ENCODE measurements at regions of chr13 and their contacts with region 1.

Region 1: DNA sequence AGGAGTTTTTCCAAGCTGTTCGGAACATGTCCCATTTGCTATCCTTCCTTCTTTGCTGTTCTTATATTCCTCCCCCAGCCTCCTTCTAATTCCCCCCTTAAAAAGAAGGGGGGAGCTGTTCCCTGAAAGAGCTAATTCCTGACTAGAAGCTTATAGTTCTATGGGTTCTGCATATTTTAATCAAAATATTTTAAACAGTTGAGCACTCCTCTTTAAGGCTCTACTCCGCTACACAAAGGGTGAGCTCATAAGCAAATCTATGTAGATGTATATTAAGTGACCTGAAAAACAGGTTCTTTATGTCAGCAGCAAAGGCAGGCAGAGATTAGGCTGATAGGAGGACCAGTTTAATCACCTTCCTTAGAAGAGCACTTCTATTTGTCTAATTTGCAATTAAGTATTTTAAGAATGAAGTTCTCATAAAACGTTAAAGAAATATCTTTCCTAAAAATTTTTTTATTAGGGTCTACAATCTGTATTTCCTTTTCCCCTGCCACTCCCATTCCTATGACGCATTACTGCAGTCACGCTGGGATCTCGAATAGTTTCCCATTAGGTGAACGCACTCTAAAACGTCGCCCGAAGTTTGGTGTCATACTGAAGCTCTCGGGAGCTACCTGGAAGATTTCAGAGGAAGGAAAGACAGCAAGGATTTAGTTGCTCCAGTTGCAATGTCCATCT is 5.2 kb downstream of the EFNB2 start:
- DNase-seq: no peak
- H3K4me3 ChIP-seq: no peak overlapping the region
- H3K4me3 Mint-ChIP-seq: peak overlapping the region; percentile 97
- H3K27ac Mint-ChIP-seq: peak overlapping the region; percentile 67
- H3K4me1 ChIP-seq: peaks cover 58% of the 10 kb centered on the region
- H3K4me1 Mint-ChIP-seq: peaks cover 62% of the 10 kb centered on the region
- H3K27me3 ChIP-seq: no peaks in the 10 kb centered on the region
- H3K27me3 Mint-ChIP-seq: no peaks in the 10 kb centered on the region
- CTCF ChIP-seq: no peak

Region 2: DNA sequence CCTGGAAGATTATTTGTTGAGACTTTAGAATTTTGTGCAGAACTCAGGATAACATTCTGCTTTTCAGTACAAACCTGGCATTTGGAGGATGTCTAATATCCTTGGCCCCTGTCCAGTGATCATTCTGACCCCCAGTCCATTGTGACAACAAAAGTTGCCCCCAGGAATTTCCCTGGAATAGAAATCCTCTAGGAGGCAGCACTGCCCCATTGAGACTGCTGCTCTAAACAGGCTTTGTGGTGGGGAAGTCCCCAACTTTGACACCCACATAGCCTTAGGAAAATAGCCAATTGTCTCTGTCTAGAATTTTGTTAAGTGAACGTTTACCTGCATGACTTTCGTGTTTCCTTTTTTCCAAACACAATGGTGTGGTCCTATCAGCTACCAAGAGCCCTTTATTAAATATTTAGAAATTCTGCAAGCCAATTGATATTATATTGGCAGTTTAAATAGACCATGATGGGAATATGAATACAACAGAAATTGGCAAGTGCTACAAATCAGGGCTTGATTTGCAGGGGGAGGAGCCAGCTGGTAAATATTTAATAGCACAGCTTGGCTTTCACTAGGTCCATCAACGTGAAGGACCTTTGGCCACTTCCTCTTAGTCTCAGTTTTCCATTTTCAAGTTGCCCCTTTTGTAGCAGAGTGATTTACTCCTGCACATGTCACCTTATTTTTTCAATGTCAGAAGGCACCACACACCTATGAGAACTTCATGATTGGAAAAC is 446.5 kb before region 1 on chr13:
- CTCF ChIA-PET with region 1: no interaction called
- POLR2A ChIA-PET with region 1: no interaction called
- intact Hi-C with region 1: loop called (anchors 1 kb)
- DNase-seq: peak; percentile 67 to 69
- H3K4me3 ChIP-seq: no peak overlapping the region
- H3K4me3 Mint-ChIP-seq: no peak overlapping the region
- H3K27ac Mint-ChIP-seq: peak overlapping the region; percentile 25
- H3K4me1 ChIP-seq: peaks cover 24% of the 10 kb centered on the region
- H3K4me1 Mint-ChIP-seq: peaks cover 15% of the 10 kb centered on the region
- H3K27me3 ChIP-seq: no peaks in the 10 kb centered on the region
- H3K27me3 Mint-ChIP-seq: no peaks in the 10 kb centered on the region
- CTCF ChIP-seq: peak; percentile 68 to 71

Region 3: DNA sequence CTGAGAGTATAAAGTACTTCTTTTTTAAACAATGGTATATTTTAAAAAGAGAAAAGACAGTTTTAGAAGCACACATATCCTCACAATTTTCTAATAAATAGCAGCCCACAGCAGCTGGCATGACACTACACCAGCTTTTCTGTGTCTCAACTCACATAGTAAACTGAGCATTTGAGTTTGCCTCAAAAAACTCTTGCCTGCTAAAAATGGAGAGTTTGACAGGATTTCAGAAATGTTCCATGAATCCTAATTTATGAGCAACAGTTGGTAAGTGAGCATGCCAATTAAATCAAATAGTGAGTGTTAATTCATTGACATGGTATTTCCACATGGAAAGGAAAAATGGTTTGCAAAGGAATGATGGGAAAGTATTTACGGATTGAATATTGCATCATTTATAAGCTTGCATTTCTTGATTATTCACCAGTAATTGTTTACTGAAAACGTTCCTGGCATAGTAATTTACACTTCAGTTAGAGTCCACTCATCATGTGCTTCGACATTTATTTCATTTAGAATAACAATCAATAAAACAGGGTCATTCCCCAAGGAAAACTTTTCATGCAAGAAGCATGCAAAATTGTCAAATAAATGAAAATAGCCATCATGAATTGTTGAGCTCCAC is 317.8 kb before region 1 on chr13:
- CTCF ChIA-PET with region 1: no interaction called
- POLR2A ChIA-PET with region 1: no interaction called
- intact Hi-C with region 1: no loop called
- DNase-seq: no peak
- H3K4me3 ChIP-seq: peak overlapping the region; percentile 58
- H3K4me3 Mint-ChIP-seq: peak overlapping the region; percentile 78
- H3K27ac Mint-ChIP-seq: peak overlapping the region; percentile 90
- H3K4me1 ChIP-seq: peaks cover 13% of the 10 kb centered on the region; the same call in 1 of the 2 replicates
- H3K4me1 Mint-ChIP-seq: peaks cover 6% of the 10 kb centered on the region
- H3K27me3 ChIP-seq: no peaks in the 10 kb centered on the region
- H3K27me3 Mint-ChIP-seq: no peaks in the 10 kb centered on the region
- CTCF ChIP-seq: no peak

Measured in Caco-2 (cell line).